Panc1 (cell line): ENCODE measurements at regions of chr2 and their contacts with region 1.

Region 1: GRCh38 chr2:191148791-191149190 is 2.0 kb downstream of the STAT4 start:
- DNase-seq: no peak
- ATAC-seq: no peak
- H3K4me3 ChIP-seq: no peak overlapping the region
- H3K27ac ChIP-seq: no peak overlapping the region
- H3K4me1 ChIP-seq: no peaks in the 10 kb centered on the region
- H3K27me3 ChIP-seq: peaks cover 18% of the 10 kb centered on the region
- CTCF ChIP-seq: no peak

Region 2: DNA sequence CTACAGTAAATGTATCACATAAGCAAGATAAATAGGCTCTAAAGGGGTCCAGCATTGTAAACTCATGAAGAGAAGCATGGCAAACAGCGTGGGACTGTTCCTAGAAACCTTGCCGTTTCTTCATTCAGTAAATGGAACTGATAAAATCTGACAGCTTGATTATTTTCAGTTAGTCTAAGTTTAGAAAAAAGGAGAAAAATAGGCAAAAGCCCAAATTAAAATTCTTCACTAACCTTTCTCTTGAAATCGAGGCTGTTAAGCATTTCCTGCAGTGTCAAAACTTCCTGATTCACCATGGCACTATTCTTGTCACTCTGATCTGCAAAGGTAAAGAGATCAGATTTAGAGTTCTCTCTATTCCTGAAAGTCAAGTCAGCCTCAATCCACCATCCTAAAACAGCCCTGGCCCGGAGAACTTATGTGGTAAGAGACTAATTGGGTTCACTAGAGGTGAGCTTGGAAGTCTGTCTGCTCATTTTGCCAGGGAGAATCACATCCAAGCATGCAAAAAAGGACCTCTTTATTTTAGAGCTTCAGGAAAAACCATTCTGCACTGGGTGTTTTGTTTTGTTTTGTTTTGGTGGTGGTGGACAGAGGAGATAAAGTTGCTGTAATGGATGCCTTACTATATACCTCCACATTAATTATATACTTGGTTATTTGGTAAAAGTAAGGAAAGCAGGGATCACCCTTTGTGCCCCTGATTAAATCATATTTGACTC is 82.4 kb before region 1 on chr2:
- CTCF ChIA-PET with region 1: no interaction called
- POLR2A ChIA-PET with region 1: no interaction called
- in situ Hi-C with region 1: no loop called
- intact Hi-C with region 1: loop called (anchors 5 kb)
- DNase-seq: no peak
- ATAC-seq: no peak
- H3K4me3 ChIP-seq: no peak overlapping the region
- H3K27ac ChIP-seq: no peak overlapping the region
- H3K4me1 ChIP-seq: no peaks in the 10 kb centered on the region
- H3K27me3 ChIP-seq: peaks cover 6% of the 10 kb centered on the region
- CTCF ChIP-seq: no peak